Sigmoid colon (tissue), 7 donors: ENCODE measurements at regions of chr1 and their contacts with region 1.

Region 1: DNA sequence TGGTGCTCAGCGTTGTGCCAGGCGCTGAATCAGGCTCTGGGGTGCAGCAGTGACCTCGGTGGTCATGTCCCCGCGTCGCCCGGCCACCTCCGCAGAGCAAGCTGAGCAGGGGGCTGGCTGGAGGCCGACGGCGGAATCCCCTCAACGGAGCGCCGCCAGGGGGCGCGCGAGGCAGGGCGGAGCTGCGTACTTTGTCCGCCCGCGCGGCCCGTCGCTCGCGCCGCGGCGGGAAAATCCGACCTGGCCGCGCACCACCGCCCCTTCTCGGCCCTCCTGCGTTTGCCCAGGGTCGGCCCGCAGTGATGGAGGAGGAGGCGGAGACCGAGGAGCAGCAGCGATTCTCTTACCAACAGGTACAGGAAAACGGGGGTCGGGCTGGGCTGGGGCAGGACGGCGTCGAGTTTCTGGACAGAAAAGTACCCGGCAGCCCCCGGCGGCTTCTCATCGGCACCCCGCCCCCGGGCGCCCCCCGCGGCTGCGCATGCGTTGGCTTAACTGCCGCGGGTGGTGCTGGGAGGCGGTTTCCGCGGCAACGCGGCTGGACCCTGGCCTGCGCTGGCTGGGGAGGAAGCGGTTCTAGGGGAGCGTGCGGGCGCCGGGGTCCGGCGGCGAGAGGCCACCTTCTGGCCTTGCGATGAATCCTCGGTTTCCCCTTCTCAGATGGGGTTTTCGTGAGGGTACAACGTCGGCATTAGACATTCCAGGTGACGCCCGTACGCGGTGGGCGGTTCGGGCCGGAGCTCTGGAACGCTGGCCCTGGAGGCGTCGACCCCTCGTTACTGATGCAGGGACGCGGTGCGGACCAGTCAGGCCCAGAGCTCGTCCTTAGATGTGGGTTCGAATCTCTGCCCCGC is at the start of gene CENPS:
- DNase-seq: peak; percentile 96
- H3K4me3 ChIP-seq: peak within 1 kb of the TSS; percentile 58 to 69 (median 60)
- H3K27ac ChIP-seq: peak within 1 kb of the TSS; percentile 71 to 83 (median 78)
- H3K4me1 ChIP-seq: peaks cover 0 to 19% (median 16%) of the 10 kb centered on the region in 4 donors
- H3K27me3 ChIP-seq: no peaks in the 10 kb centered on the region
- CTCF ChIP-seq: peak; percentile 84 to 97 (median 96)
- EP300 ChIP-seq: no peak
- POLR2A ChIP-seq: no peak
- total RNA-seq, gene CENPS: 2.8 to 15.0 (median 10.7) TPM

Region 2: GRCh38 chr1:9874959-9875635 is 555.3 kb before region 1 on chr1:
- intact Hi-C with region 1: loop called (anchors 5 kb)
- DNase-seq: peak; percentile 83
- H3K4me3 ChIP-seq: peak overlapping the region in 3 of 4 donors; percentile 6 to 39 (median 33)
- H3K27ac ChIP-seq: peak overlapping the region; percentile 19 to 64 (median 56)
- H3K4me1 ChIP-seq: peaks cover 0 to 17% (median 9%) of the 10 kb centered on the region in 4 donors
- H3K27me3 ChIP-seq: no peaks in the 10 kb centered on the region
- CTCF ChIP-seq: peak; percentile 78 to 95 (median 92)
- EP300 ChIP-seq: no peak
- POLR2A ChIP-seq: no peak

Region 3: GRCh38 chr1:10378081-10378841 is 52.2 kb before region 1 on chr1:
- intact Hi-C with region 1: loop called (anchors 1 kb)
- DNase-seq: peak; percentile 69
- H3K4me3 ChIP-seq: no peak overlapping the region
- H3K27ac ChIP-seq: peak overlapping the region; percentile 63 to 73 (median 66)
- H3K4me1 ChIP-seq: peaks cover 0 to 10% (median 3%) of the 10 kb centered on the region in 4 donors
- H3K27me3 ChIP-seq: no peaks in the 10 kb centered on the region
- CTCF ChIP-seq: no peak
- EP300 ChIP-seq: no peak
- POLR2A ChIP-seq: no peak

Region 4: GRCh38 chr1:10398734-10399623 is 31.5 kb before region 1 on chr1 and contains the start of gene PGD:
- intact Hi-C with region 1: loop called (anchors 1 kb)
- DNase-seq: peak; percentile 99
- H3K4me3 ChIP-seq: peak within 1 kb of the TSS; percentile 71 to 95 (median 82)
- H3K27ac ChIP-seq: peak within 1 kb of the TSS; percentile 88 to 93 (median 90)
- H3K4me1 ChIP-seq: peaks cover 0 to 26% (median 16%) of the 10 kb centered on the region in 4 donors
- H3K27me3 ChIP-seq: no peaks in the 10 kb centered on the region
- CTCF ChIP-seq: no peak
- EP300 ChIP-seq: no peak
- POLR2A ChIP-seq: peak; percentile 25 to 54
- total RNA-seq, gene PGD: 30.6 to 44.2 (median 36.9) TPM

Region 5: DNA sequence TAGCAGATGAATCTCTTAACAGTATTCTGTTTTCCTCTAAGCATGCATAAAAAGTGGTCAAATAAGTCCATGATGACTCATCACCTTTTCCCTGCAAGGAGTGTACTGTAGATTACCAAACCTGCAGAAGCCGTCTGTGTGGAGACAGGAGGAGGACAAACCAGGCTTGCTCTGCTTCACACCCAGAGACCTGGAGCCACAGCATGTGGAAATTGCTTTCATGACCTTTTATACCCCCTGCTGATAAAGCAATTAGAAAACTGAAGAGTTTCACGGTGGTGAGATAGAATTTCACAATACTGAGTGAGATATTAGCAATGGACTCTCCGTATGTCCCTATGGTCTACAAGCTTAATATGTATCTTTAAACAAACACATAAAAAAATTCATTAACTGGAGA is 28.7 kb after region 1 on chr1:
- intact Hi-C with region 1: no loop called
- DNase-seq: no peak
- H3K4me3 ChIP-seq: no peak overlapping the region
- H3K27ac ChIP-seq: no peak overlapping the region
- H3K4me1 ChIP-seq: no peaks in the 10 kb centered on the region
- H3K27me3 ChIP-seq: no peaks in the 10 kb centered on the region
- CTCF ChIP-seq: no peak
- EP300 ChIP-seq: no peak
- POLR2A ChIP-seq: no peak

Region 6: GRCh38 chr1:10494754-10495474 is 64.5 kb after region 1 on chr1:
- intact Hi-C with region 1: loop called (anchors 5 kb)
- DNase-seq: peak; percentile 79
- H3K4me3 ChIP-seq: peak overlapping the region in 2 of 4 donors; percentile 24 to 27
- H3K27ac ChIP-seq: peak overlapping the region; percentile 1 to 60 (median 55)
- H3K4me1 ChIP-seq: peaks cover 0 to 15% (median 14%) of the 10 kb centered on the region in 4 donors
- H3K27me3 ChIP-seq: no peaks in the 10 kb centered on the region
- CTCF ChIP-seq: peak; percentile 68 to 93 (median 89)
- EP300 ChIP-seq: peak in 2 of 4 donors; percentile 45 to 84
- POLR2A ChIP-seq: no peak